ENCODE measurements at regions of chr11 and their contacts with region 1.

Region 1: DNA sequence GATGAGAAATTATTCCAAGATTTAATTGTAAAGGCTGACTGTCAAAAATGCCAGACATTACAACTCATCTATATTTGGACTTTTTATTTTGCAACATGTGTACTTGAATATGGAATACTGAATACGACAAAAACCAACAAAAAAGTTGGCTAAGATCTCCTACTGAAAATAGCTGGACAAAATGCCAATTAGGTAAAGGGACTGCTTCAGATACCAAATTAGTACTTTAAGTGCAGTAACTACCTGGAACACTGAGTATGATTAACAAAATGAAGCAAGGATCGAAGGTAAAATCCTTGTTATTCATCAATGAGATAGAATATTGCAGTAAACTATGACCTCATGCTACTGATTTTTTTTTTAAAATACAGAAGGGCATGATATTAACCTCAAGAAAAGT is 173.8 kb downstream of the SOX6 start:
- DNase-seq: no peak
- H3K4me3 ChIP-seq: no peak overlapping the region
- H3K27ac ChIP-seq: no peak overlapping the region
- H3K4me1 ChIP-seq: no peaks in the 10 kb centered on the region
- H3K27me3 ChIP-seq: no peaks in the 10 kb centered on the region
- CTCF ChIP-seq: no peak
- POLR2A ChIP-seq: no peak

Region 2: DNA sequence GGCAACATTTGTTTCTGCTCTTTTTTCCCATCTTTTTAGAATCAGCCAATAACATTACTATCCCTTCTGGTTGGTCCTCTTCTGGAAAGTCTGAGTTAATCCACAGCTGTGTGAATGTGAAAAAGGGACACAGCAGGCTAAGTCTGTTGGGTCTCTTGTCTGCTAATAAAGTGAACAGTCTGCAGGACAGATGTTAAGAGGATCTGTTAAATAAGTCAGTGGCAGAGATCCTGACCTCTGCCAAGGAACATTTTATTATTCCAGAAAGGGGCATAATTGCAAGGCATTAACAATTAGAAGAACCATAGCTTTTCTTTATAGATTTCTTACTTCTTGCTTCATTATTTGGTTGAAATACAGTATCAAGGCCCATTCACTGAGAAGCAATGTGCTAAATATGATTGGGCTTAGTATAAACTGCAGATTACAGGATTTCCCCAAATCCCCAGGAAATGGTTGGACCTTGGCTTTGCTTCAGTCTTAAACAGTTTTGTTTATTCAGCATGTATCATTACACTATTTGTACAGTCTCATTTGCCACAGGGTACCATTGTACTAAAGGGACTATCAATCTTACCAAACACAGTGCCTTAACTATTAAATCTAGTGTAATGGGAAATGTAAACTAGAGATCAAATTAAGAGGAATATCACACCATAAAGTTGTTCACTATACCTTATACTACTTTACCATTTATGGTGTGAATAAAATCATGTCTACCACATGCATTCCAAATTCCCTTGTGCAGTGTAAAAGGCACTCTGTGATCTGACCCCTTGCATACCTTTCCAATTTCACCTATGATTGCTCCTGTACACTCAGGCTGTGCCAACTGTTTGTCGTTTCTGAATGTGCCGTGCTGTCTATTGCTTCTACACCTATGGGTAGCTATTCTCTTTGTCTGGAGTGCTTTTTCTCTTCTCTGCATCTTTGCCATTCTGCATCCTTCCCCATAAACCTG is 100.2 kb before region 1 on chr11:
- intact Hi-C with region 1: no loop called
- DNase-seq: no peak
- H3K4me3 ChIP-seq: no peak overlapping the region
- H3K27ac ChIP-seq: no peak overlapping the region
- H3K4me1 ChIP-seq: peaks cover 6% of the 10 kb centered on the region
- H3K27me3 ChIP-seq: no peaks in the 10 kb centered on the region
- CTCF ChIP-seq: no peak
- POLR2A ChIP-seq: no peak

Region 3: GRCh38 chr11:16239141-16240105 is 56.9 kb after region 1 on chr11:
- intact Hi-C with region 1: loop called (anchors 2 kb)
- DNase-seq: no peak
- H3K4me3 ChIP-seq: no peak overlapping the region
- H3K27ac ChIP-seq: no peak overlapping the region
- H3K4me1 ChIP-seq: no peaks in the 10 kb centered on the region
- H3K27me3 ChIP-seq: no peaks in the 10 kb centered on the region
- CTCF ChIP-seq: no peak
- POLR2A ChIP-seq: no peak

Region 4: DNA sequence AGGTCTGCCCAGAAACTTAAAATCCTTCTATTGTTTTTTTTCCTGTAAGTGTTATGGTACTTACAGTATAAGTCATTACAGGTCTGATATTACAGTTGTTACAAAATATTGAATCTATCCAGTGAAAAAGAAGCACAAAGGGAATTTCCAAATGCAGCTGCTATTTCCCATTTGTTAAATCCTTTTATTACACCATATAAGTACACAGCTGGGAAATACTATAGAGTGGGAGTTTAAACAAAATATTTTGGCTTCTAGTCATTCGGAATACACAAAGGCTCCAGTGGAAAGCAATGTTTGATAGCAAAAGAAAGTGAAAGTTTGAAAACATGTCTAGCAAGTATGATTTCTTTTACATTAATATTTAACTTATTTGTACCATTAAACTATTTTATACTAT is 155.8 kb after region 1 on chr11:
- intact Hi-C with region 1: no loop called
- DNase-seq: no peak
- H3K4me3 ChIP-seq: no peak overlapping the region
- H3K27ac ChIP-seq: no peak overlapping the region
- H3K4me1 ChIP-seq: no peaks in the 10 kb centered on the region
- H3K27me3 ChIP-seq: no peaks in the 10 kb centered on the region
- CTCF ChIP-seq: no peak
- POLR2A ChIP-seq: no peak

Measured in vagina (tissue), 2 donors.